ENCODE measurements at regions of chr17 and their contacts with region 1.

Region 1: GRCh38 chr17:61451538-61452300 is 503 bp upstream of the TBX4 start:
- DNase-seq: no peak
- ATAC-seq: peak; percentile 29
- H3K4me3 ChIP-seq: no peak overlapping the region
- H3K4me3 Mint-ChIP-seq: no peak overlapping the region
- H3K27ac ChIP-seq: no peak overlapping the region
- H3K27ac Mint-ChIP-seq: no peak overlapping the region
- H3K4me1 ChIP-seq: peaks cover 29% of the 10 kb centered on the region
- H3K4me1 Mint-ChIP-seq: peaks cover 34% of the 10 kb centered on the region
- H3K27me3 ChIP-seq: peaks cover 58 to 87% of the 10 kb centered on the region in 2 experiments
- H3K27me3 Mint-ChIP-seq: peaks cover 75% of the 10 kb centered on the region
- CTCF ChIP-seq: no peak

Region 2: GRCh38 chr17:61338000-61338798 is 113.5 kb before region 1 on chr17:
- CTCF ChIA-PET with region 1: no interaction called
- POLR2A ChIA-PET with region 1: no interaction called
- intact Hi-C with region 1: no loop called
- DNase-seq: no peak
- ATAC-seq: no peak
- H3K4me3 ChIP-seq: no peak overlapping the region
- H3K4me3 Mint-ChIP-seq: no peak overlapping the region
- H3K27ac ChIP-seq: no peak overlapping the region
- H3K27ac Mint-ChIP-seq: no peak overlapping the region
- H3K4me1 ChIP-seq: no peaks in the 10 kb centered on the region
- H3K4me1 Mint-ChIP-seq: no peaks in the 10 kb centered on the region
- H3K27me3 ChIP-seq: no peaks in the 10 kb centered on the region
- H3K27me3 Mint-ChIP-seq: no peaks in the 10 kb centered on the region
- CTCF ChIP-seq: no peak

Region 3: GRCh38 chr17:61379457-61380216 is 72.1 kb before region 1 on chr17:
- CTCF ChIA-PET with region 1: no interaction called
- POLR2A ChIA-PET with region 1: no interaction called
- intact Hi-C with region 1: loop called in 1 of 2 experiments (anchors 10 kb)
- DNase-seq: no peak
- ATAC-seq: no peak
- H3K4me3 ChIP-seq: no peak overlapping the region
- H3K4me3 Mint-ChIP-seq: no peak overlapping the region
- H3K27ac ChIP-seq: no peak overlapping the region
- H3K27ac Mint-ChIP-seq: no peak overlapping the region
- H3K4me1 ChIP-seq: no peaks in the 10 kb centered on the region
- H3K4me1 Mint-ChIP-seq: no peaks in the 10 kb centered on the region
- H3K27me3 ChIP-seq: no peaks in the 10 kb centered on the region
- H3K27me3 Mint-ChIP-seq: no peaks in the 10 kb centered on the region
- CTCF ChIP-seq: no peak

Region 4: GRCh38 chr17:61537268-61537771 is 85.6 kb after region 1 on chr17:
- CTCF ChIA-PET with region 1: no interaction called
- POLR2A ChIA-PET with region 1: no interaction called
- intact Hi-C with region 1: no loop called
- DNase-seq: no peak
- ATAC-seq: no peak
- H3K4me3 ChIP-seq: no peak overlapping the region
- H3K4me3 Mint-ChIP-seq: no peak overlapping the region
- H3K27ac ChIP-seq: no peak overlapping the region
- H3K27ac Mint-ChIP-seq: no peak overlapping the region
- H3K4me1 ChIP-seq: no peaks in the 10 kb centered on the region
- H3K4me1 Mint-ChIP-seq: no peaks in the 10 kb centered on the region
- H3K27me3 ChIP-seq: no peaks in the 10 kb centered on the region
- H3K27me3 Mint-ChIP-seq: peaks cover 11% of the 10 kb centered on the region
- CTCF ChIP-seq: no peak

Measured in CD4-positive, alpha-beta T cell (primary cell).